ENCODE measurements at regions of chr13 and their contacts with region 1.

Region 1: DNA sequence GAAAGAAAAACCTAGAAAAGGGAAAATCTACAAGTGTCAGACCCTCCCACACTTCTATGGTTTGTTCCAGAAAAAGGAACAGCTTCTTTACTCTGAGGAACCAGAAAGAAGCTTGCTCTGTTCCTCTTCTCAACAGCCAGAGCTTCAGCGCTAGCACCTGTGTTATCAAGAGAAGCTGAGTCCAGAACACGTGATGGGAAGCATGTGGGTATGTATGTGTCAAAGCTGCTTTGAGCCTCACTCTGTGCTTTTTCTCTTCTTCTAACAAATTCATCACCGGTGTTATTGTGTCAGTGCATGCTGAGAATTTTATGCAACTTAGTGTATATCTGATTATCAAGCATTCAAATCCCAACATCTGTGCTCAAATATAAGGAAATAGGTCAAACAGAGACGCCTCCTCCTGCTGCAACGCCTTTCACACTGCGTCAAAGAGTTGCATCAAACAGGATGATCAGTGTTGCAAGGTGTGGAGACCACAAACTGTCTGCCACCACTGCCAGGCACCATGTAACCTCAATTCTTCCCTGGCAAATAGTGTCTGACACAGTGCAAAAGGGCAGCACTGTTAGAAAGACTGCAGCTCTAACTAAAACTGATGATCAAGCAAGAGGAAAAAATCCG is 83.9 kb downstream of the LRRC63 start:
- DNase-seq: peak in 1 of 4 experiments; percentile 22
- ATAC-seq: peak; percentile 66
- H3K4me3 ChIP-seq: no peak overlapping the region
- H3K27ac ChIP-seq: no peak overlapping the region
- H3K4me1 ChIP-seq: peaks cover 0 to 26% of the 10 kb centered on the region in 2 experiments; a peak in 3 of 5 replicates
- H3K27me3 ChIP-seq: no peaks in the 10 kb centered on the region
- CTCF ChIP-seq: no peak
- EP300 ChIP-seq: no peak
- POLR2A ChIP-seq: no peak
- RAD21 ChIP-seq: no peak

Region 2: DNA sequence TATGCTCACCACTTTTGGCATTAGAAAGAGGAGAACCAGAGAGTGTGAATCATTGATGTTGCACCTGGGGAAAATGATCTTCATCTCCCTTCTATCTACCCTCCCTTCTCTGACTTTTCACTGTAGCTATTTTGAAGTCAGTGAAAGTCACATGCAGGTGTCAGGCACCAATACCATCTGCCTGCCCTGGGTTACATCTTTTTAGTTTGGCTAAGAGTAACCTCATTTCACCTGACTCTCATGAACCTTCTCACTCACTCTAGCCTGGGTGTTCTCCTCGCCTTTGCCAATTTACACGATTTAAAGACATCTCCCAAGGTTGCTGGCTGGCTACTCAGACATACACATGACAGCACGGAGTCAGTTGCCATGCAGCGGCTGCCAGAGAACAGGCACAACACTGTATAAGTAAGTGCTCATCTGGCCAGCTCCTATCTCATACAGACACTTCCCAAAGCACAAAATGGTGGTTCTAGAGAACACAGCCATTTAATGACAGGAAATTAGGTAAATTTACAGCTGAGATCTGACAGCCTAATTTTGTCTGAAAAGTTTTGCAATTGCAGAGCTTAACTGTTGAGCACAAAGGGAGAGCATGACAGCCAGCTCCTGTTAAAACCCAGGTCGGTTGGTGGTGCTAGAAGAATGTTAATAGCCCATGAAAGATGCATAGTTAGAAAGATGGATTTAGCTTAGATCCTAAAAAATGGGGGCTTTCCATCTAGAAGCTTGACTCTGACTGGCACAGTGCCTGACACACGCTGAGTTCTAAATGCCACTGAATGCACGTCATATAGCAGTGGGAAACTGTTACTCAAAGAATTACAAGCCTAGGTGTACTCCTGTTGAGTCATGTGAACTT is 146.1 kb before region 1 on chr13:
- CTCF ChIA-PET with region 1: no interaction called
- POLR2A ChIA-PET with region 1: no interaction called
- in situ Hi-C with region 1: loop called (anchors 10 kb)
- intact Hi-C with region 1: no loop called
- DNase-seq: no peak
- ATAC-seq: no peak; the same call in 1 of the 3 replicates
- H3K4me3 ChIP-seq: no peak overlapping the region
- H3K27ac ChIP-seq: no peak overlapping the region
- H3K4me1 ChIP-seq: no peaks in the 10 kb centered on the region
- H3K27me3 ChIP-seq: no peaks in the 10 kb centered on the region
- CTCF ChIP-seq: no peak
- EP300 ChIP-seq: no peak
- POLR2A ChIP-seq: no peak
- RAD21 ChIP-seq: no peak

Measured in K562 (cell line).